ENCODE measurements at regions of chr4 and their contacts with region 1.

Region 1: DNA sequence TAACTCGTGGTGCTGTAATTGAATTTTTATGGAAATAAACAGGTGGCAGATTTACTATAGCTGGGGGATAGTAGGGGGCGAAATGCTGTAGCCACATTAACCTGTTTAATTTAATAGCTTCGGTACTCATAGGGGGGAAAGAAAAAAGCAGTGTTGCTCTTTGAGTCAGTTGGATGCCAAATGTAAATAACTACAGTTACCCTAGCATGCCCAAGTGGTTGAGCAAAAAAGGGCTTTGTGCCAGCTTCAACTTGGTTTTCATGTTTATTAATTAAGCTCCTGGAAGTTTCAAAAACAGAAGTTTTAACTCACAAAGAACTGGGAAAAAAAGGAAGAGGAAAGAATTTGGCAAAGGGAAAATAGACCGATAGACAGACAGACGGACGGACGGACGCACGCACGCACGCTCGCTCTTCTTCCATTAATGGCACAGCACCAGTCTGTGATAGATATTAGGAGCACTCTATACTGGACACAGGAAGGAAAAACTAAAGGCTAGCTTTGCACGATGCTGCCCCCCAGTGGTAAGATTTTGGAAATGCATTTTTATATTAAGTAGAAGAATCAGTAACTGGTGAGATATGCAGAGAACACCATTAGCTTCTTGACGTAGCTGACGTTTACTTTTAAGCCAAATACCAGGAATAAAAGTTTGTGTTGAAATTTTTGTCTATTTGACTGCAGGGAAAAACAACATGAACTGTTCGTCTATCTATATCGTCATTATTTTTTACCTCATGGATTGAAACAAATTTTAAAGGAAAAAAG is 151.8 kb downstream of the SLC7A11 start:
- DNase-seq: peak; percentile 85
- ATAC-seq: peak; percentile 88
- H3K4me3 ChIP-seq: peak overlapping the region; percentile 66
- H3K27ac ChIP-seq: no peak overlapping the region
- H3K4me1 ChIP-seq: peaks cover 4% of the 10 kb centered on the region; the same call in 1 of the 2 replicates
- H3K27me3 ChIP-seq: no peaks in the 10 kb centered on the region
- CTCF ChIP-seq: peak; percentile 74

Region 2: GRCh38 chr4:138182838-138183426 is 92.6 kb after region 1 on chr4:
- CTCF ChIA-PET with region 1: interaction called, 3 read pairs
- POLR2A ChIA-PET with region 1: no interaction called
- intact Hi-C with region 1: loop called (anchors 5 kb)
- DNase-seq: peak; percentile 67
- ATAC-seq: peak; percentile 15; the same call in 1 of the 2 replicates
- H3K4me3 ChIP-seq: no peak overlapping the region
- H3K27ac ChIP-seq: no peak overlapping the region
- H3K4me1 ChIP-seq: no peaks in the 10 kb centered on the region
- H3K27me3 ChIP-seq: no peaks in the 10 kb centered on the region
- CTCF ChIP-seq: peak; percentile 73

Region 3: GRCh38 chr4:138522366-138522765 is 432.0 kb after region 1 on chr4:
- CTCF ChIA-PET with region 1: no interaction called
- POLR2A ChIA-PET with region 1: no interaction called
- intact Hi-C with region 1: loop called (anchors 5 kb)
- DNase-seq: peak; percentile 61
- ATAC-seq: peak; percentile 79
- H3K4me3 ChIP-seq: no peak overlapping the region
- H3K27ac ChIP-seq: no peak overlapping the region
- H3K4me1 ChIP-seq: no peaks in the 10 kb centered on the region
- H3K27me3 ChIP-seq: no peaks in the 10 kb centered on the region
- CTCF ChIP-seq: peak; percentile 65

Region 4: GRCh38 chr4:138576684-138577083 is 486.4 kb after region 1 on chr4:
- CTCF ChIA-PET with region 1: no interaction called
- POLR2A ChIA-PET with region 1: no interaction called
- intact Hi-C with region 1: loop called (anchors 2 kb)
- DNase-seq: peak; percentile 64
- ATAC-seq: peak; percentile 33; the same call in 1 of the 2 replicates
- H3K4me3 ChIP-seq: no peak overlapping the region
- H3K27ac ChIP-seq: no peak overlapping the region
- H3K4me1 ChIP-seq: no peaks in the 10 kb centered on the region
- H3K27me3 ChIP-seq: no peaks in the 10 kb centered on the region
- CTCF ChIP-seq: peak; percentile 75